Activated CD4-positive, alpha-beta memory T cell treated with anti-CD3 and anti-CD28 coated beads for 36 hours (primary cell): ENCODE measurements at regions of chr3 and their contacts with region 1.

Region 1: DNA sequence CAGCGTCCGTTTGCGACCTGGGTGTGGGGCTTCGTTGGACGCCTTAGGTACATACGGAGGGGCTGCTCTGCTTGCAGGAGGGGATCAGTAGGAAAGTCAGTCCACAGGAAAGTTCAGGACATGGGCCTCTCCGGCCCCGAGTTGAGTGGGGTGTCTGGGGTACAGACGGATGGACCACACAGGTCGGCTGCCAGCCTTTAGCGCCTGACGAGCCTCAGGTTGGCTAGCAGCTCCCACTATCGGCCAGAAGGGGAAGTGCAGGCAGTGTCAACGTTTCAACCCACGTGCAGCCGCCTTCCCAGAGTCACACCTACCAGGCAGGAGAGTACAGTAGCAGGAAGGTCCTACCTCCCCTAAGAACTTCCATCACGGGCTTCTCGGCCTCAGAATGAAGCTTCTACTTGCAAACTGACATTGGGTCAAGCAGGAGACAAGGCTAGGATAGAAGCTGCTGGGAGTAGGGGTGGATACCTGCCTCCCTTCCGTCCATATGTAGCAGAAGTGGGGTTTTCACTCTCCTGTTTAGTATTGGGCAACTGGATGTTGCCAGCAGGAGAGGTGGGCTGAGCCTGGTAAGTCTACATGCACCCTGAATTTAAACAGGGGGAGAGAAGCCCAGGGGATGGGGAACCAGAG is 1.8 kb upstream of the SCN5A start:
- DNase-seq: peak; percentile 80
- H3K4me3 Mint-ChIP-seq: peak overlapping the region; percentile 10
- H3K27ac Mint-ChIP-seq: no peak overlapping the region
- H3K4me1 Mint-ChIP-seq: peaks cover 11% of the 10 kb centered on the region
- H3K27me3 Mint-ChIP-seq: peaks cover 13% of the 10 kb centered on the region

Region 2: GRCh38 chr3:38346587-38347410 is 304.5 kb before region 1 on chr3 and contains the start of gene XYLB:
- CTCF ChIA-PET with region 1: interaction called, 3 read pairs
- POLR2A ChIA-PET with region 1: no interaction called
- intact Hi-C with region 1: loop called (anchors 5 kb)
- DNase-seq: peak; percentile 84
- H3K4me3 Mint-ChIP-seq: peak within 1 kb of the TSS; percentile 71
- H3K27ac Mint-ChIP-seq: no peak within 1 kb of the TSS
- H3K4me1 Mint-ChIP-seq: peaks cover 6% of the 10 kb centered on the region
- H3K27me3 Mint-ChIP-seq: no peaks in the 10 kb centered on the region
- total RNA-seq, gene XYLB: 4.8 to 4.9 TPM

Region 3: GRCh38 chr3:38627956-38628355 is 23.3 kb before region 1 on chr3:
- CTCF ChIA-PET with region 1: interaction called, 10 read pairs
- POLR2A ChIA-PET with region 1: no interaction called
- intact Hi-C with region 1: no loop called
- DNase-seq: peak; percentile 42
- H3K4me3 Mint-ChIP-seq: no peak overlapping the region
- H3K27ac Mint-ChIP-seq: no peak overlapping the region
- H3K4me1 Mint-ChIP-seq: no peaks in the 10 kb centered on the region
- H3K27me3 Mint-ChIP-seq: no peaks in the 10 kb centered on the region

Region 4: GRCh38 chr3:38640661-38641452 is 10.4 kb before region 1 on chr3:
- CTCF ChIA-PET with region 1: interaction called, 11 read pairs
- POLR2A ChIA-PET with region 1: no interaction called
- intact Hi-C with region 1: no loop called
- DNase-seq: no peak
- H3K4me3 Mint-ChIP-seq: no peak overlapping the region
- H3K27ac Mint-ChIP-seq: no peak overlapping the region
- H3K4me1 Mint-ChIP-seq: no peaks in the 10 kb centered on the region
- H3K27me3 Mint-ChIP-seq: peaks cover 4% of the 10 kb centered on the region

Region 5: GRCh38 chr3:38662544-38662943 is 11.3 kb after region 1 on chr3:
- CTCF ChIA-PET with region 1: interaction called, 17 read pairs
- POLR2A ChIA-PET with region 1: no interaction called
- intact Hi-C with region 1: no loop called
- DNase-seq: no peak
- H3K4me3 Mint-ChIP-seq: no peak overlapping the region
- H3K27ac Mint-ChIP-seq: no peak overlapping the region
- H3K4me1 Mint-ChIP-seq: no peaks in the 10 kb centered on the region
- H3K27me3 Mint-ChIP-seq: peaks cover 33% of the 10 kb centered on the region

Region 6: GRCh38 chr3:38773528-38773927 is 122.3 kb after region 1 on chr3:
- CTCF ChIA-PET with region 1: no interaction called
- POLR2A ChIA-PET with region 1: no interaction called
- intact Hi-C with region 1: no loop called
- DNase-seq: no peak
- H3K4me3 Mint-ChIP-seq: no peak overlapping the region
- H3K27ac Mint-ChIP-seq: no peak overlapping the region
- H3K4me1 Mint-ChIP-seq: no peaks in the 10 kb centered on the region
- H3K27me3 Mint-ChIP-seq: peaks cover 16% of the 10 kb centered on the region

Region 7: DNA sequence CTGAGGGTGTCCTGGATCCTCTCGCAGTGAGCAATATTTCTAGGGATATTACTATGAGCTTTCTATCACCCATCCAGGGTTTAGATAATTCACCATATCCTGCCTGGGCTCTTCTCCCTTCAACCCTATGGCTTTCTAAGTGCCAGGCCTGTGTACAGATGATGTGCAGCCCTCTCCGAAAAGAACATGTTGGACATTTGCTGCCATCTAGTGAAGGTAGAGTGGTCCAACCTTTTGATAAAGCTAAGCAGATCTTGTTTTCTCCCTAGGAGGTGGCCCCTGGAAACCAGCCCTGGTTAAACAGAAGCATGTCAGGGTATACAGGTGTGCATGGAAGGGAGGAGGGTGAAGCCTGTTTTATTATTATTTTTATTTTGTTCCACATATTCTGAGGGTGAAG is 192.6 kb after region 1 on chr3:
- CTCF ChIA-PET with region 1: interaction called, 7 read pairs
- POLR2A ChIA-PET with region 1: no interaction called
- intact Hi-C with region 1: loop called (anchors 1 kb)
- DNase-seq: no peak
- H3K4me3 Mint-ChIP-seq: no peak overlapping the region
- H3K27ac Mint-ChIP-seq: no peak overlapping the region
- H3K4me1 Mint-ChIP-seq: no peaks in the 10 kb centered on the region
- H3K27me3 Mint-ChIP-seq: peaks cover 3% of the 10 kb centered on the region

Region 8: GRCh38 chr3:39000008-39000450 is 348.8 kb after region 1 on chr3:
- CTCF ChIA-PET with region 1: interaction called, 15 read pairs
- POLR2A ChIA-PET with region 1: no interaction called
- intact Hi-C with region 1: loop called (anchors 1 kb)
- DNase-seq: no peak
- H3K4me3 Mint-ChIP-seq: no peak overlapping the region
- H3K27ac Mint-ChIP-seq: no peak overlapping the region
- H3K4me1 Mint-ChIP-seq: no peaks in the 10 kb centered on the region
- H3K27me3 Mint-ChIP-seq: peaks cover 2% of the 10 kb centered on the region